CD4-positive, alpha-beta memory T cell (primary cell): ENCODE measurements at regions of chr2 and their contacts with region 1.

Region 1: DNA sequence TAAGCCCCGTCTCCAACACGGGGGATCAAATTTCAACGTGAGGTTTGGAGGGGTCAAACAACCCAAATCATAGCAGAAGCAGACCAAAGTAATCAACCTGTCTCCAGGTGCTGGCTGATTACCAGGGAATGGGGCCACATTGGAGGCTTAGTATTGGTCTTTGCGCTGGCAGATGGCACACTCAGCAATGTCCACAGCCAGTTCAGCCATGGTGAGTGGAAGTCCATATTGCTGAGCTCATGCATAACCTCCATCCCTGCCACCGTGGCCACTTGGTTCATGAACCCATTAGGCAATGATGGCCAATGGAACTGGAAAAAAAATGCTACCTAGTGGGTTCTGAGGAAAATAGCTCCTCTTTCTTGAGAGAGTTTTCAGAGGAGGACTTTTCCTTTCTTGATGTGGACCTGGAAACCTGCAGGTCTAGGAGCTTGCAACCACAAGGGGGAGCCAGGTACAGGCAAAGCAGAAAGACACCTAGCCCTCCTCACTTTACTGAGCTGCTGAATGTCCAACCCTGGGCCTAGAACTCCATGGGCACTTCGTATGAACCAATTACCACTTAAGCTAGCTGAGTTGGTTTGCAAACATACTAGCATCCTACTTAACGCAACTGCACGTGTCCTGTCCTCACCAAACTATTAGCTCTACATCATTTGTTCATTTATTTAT is 128.0 kb upstream of the GYPC start:
- DNase-seq: peak; percentile 57 to 68 (median 63)
- H3K4me3 ChIP-seq: no peak overlapping the region
- H3K4me3 Mint-ChIP-seq: no peak overlapping the region
- H3K27ac ChIP-seq: no peak overlapping the region
- H3K27ac Mint-ChIP-seq: no peak overlapping the region
- H3K4me1 ChIP-seq: no peaks in the 10 kb centered on the region
- H3K4me1 Mint-ChIP-seq: no peaks in the 10 kb centered on the region
- H3K27me3 ChIP-seq: no peaks in the 10 kb centered on the region
- H3K27me3 Mint-ChIP-seq: peaks cover 0 to 3% of the 10 kb centered on the region in 2 donors

Region 2: GRCh38 chr2:126463892-126464674 is 63.9 kb before region 1 on chr2:
- CTCF ChIA-PET with region 1: no interaction called
- POLR2A ChIA-PET with region 1: no interaction called
- intact Hi-C with region 1: no loop called
- DNase-seq: no peak
- H3K4me3 ChIP-seq: no peak overlapping the region
- H3K4me3 Mint-ChIP-seq: no peak overlapping the region
- H3K27ac ChIP-seq: no peak overlapping the region
- H3K27ac Mint-ChIP-seq: no peak overlapping the region
- H3K4me1 ChIP-seq: no peaks in the 10 kb centered on the region
- H3K4me1 Mint-ChIP-seq: peaks cover 0 to 8% (median 1%) of the 10 kb centered on the region in 4 donors
- H3K27me3 ChIP-seq: peaks cover 3% of the 10 kb centered on the region
- H3K27me3 Mint-ChIP-seq: peaks cover 1 to 4% of the 10 kb centered on the region in 2 donors

Region 3: GRCh38 chr2:126634273-126634861 is 106.4 kb after region 1 on chr2:
- CTCF ChIA-PET with region 1: interaction called, 15 read pairs
- POLR2A ChIA-PET with region 1: no interaction called
- intact Hi-C with region 1: no loop called
- DNase-seq: peak in 4 of 5 donors; percentile 9 to 19 (median 14)
- H3K4me3 ChIP-seq: no peak overlapping the region
- H3K4me3 Mint-ChIP-seq: no peak overlapping the region
- H3K27ac ChIP-seq: no peak overlapping the region
- H3K27ac Mint-ChIP-seq: no peak overlapping the region
- H3K4me1 ChIP-seq: no peaks in the 10 kb centered on the region
- H3K4me1 Mint-ChIP-seq: peaks cover 0 to 4% (median 3%) of the 10 kb centered on the region in 4 donors
- H3K27me3 ChIP-seq: peaks cover 3% of the 10 kb centered on the region
- H3K27me3 Mint-ChIP-seq: peaks cover 0 to 3% of the 10 kb centered on the region in 2 donors

Region 4: DNA sequence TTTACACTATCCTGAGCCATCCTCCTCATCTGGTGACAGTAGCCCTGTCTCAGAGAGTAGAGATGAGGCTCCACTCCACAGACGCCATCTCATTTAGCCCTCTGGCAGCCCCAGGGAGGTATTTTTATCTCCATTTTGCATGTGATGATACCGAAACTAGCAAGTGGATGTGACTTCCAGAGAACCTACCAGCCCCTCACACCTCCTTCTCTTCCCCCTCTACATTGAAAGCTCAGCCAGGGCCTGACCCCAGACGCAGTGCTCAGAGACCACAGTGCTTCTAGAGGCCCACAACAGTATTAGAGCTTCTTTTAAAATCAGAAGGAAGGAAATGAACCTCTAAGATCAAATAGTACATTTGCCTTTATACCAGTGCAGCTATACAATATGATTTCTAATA is 136.3 kb after region 1 on chr2:
- CTCF ChIA-PET with region 1: interaction called, 13 read pairs
- POLR2A ChIA-PET with region 1: interaction called, 3 read pairs
- intact Hi-C with region 1: no loop called
- DNase-seq: peak in 4 of 5 donors; percentile 15 to 37 (median 28)
- H3K4me3 ChIP-seq: peak overlapping the region in 1 of 2 donors; percentile 37
- H3K4me3 Mint-ChIP-seq: peak overlapping the region; percentile 73 to 87 (median 76)
- H3K27ac ChIP-seq: peak overlapping the region; percentile 23
- H3K27ac Mint-ChIP-seq: peak overlapping the region; percentile 94 to 98 (median 96)
- H3K4me1 ChIP-seq: peaks cover 80% of the 10 kb centered on the region
- H3K4me1 Mint-ChIP-seq: peaks cover 56 to 96% (median 86%) of the 10 kb centered on the region in 4 donors
- H3K27me3 ChIP-seq: no peaks in the 10 kb centered on the region
- H3K27me3 Mint-ChIP-seq: no peaks in the 10 kb centered on the region

Region 5: DNA sequence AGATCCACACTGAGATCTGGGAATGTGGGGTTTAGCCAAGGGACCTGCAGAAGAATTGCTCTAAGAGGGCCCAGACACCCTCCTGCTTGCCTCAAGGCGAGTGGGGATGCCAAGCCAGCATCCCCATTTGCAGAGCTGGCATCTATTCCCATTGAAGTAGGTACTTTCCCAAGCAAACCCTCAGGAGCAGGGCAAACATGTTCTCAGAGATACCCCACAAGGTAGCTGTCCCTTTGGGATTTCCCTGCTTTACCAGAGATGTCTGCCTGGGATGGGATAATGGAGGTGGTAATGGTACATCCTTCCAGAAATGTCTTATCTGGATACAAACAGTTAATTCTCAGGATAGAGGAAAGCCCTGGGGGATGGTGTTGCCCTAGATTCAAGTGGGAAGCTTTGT is 179.2 kb after region 1 on chr2:
- CTCF ChIA-PET with region 1: no interaction called
- POLR2A ChIA-PET with region 1: no interaction called
- intact Hi-C with region 1: no loop called
- DNase-seq: no peak
- H3K4me3 ChIP-seq: no peak overlapping the region
- H3K4me3 Mint-ChIP-seq: no peak overlapping the region
- H3K27ac ChIP-seq: no peak overlapping the region
- H3K27ac Mint-ChIP-seq: no peak overlapping the region
- H3K4me1 ChIP-seq: no peaks in the 10 kb centered on the region
- H3K4me1 Mint-ChIP-seq: peaks cover 0 to 3% (median 0%) of the 10 kb centered on the region in 4 donors
- H3K27me3 ChIP-seq: no peaks in the 10 kb centered on the region
- H3K27me3 Mint-ChIP-seq: peaks cover 0 to under 1% of the 10 kb centered on the region in 2 donors

Region 6: GRCh38 chr2:126761981-126762878 is 234.3 kb after region 1 on chr2:
- CTCF ChIA-PET with region 1: interaction called, 14 read pairs
- POLR2A ChIA-PET with region 1: interaction called, 5 read pairs
- intact Hi-C with region 1: loop called (anchors 5 kb)
- DNase-seq: peak; percentile 27 to 67 (median 59)
- H3K4me3 ChIP-seq: peak overlapping the region in 1 of 2 donors; percentile 11
- H3K4me3 Mint-ChIP-seq: peak overlapping the region; percentile 59 to 82 (median 72)
- H3K27ac ChIP-seq: peak overlapping the region; percentile 36
- H3K27ac Mint-ChIP-seq: peak overlapping the region; percentile 81 to 96 (median 90)
- H3K4me1 ChIP-seq: peaks cover 46% of the 10 kb centered on the region
- H3K4me1 Mint-ChIP-seq: peaks cover 34 to 75% (median 52%) of the 10 kb centered on the region in 4 donors
- H3K27me3 ChIP-seq: no peaks in the 10 kb centered on the region
- H3K27me3 Mint-ChIP-seq: no peaks in the 10 kb centered on the region

Region 7: DNA sequence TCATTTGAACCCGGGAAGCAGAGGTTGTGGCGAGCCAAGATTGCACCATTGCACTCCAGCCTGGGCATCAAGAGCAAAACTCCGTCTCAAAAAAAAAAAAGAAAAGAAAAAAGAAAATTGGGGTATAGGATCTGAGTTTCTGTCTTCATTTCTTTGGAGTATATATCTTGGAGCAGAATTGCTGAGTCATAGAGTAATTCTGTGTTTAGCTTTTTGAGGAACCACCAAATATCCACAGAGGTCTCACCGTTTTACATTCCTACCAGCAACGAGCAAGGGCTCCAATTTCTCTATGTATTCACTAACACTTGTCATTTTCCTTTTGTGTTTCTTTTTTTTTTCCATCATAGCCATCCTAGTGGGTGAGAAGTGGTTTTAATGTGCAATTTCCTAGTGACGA is 283.1 kb after region 1 on chr2:
- CTCF ChIA-PET with region 1: no interaction called
- POLR2A ChIA-PET with region 1: no interaction called
- intact Hi-C with region 1: no loop called
- DNase-seq: no peak
- H3K4me3 ChIP-seq: no peak overlapping the region
- H3K4me3 Mint-ChIP-seq: no peak overlapping the region
- H3K27ac ChIP-seq: no peak overlapping the region
- H3K27ac Mint-ChIP-seq: no peak overlapping the region
- H3K4me1 ChIP-seq: no peaks in the 10 kb centered on the region
- H3K4me1 Mint-ChIP-seq: no peaks in the 10 kb centered on the region
- H3K27me3 ChIP-seq: no peaks in the 10 kb centered on the region
- H3K27me3 Mint-ChIP-seq: peaks cover 6 to 7% of the 10 kb centered on the region in 2 donors

Region 8: GRCh38 chr2:126971481-126972278 is 443.7 kb after region 1 on chr2:
- CTCF ChIA-PET with region 1: interaction called, 21 read pairs
- POLR2A ChIA-PET with region 1: interaction called, 3 read pairs
- intact Hi-C with region 1: no loop called
- DNase-seq: peak; percentile 51 to 64 (median 59)
- H3K4me3 ChIP-seq: peak overlapping the region in 1 of 2 donors; percentile 41
- H3K4me3 Mint-ChIP-seq: peak overlapping the region; percentile 65 to 82 (median 80)
- H3K27ac ChIP-seq: no peak overlapping the region
- H3K27ac Mint-ChIP-seq: no peak overlapping the region
- H3K4me1 ChIP-seq: no peaks in the 10 kb centered on the region
- H3K4me1 Mint-ChIP-seq: peaks cover 0 to 8% (median 4%) of the 10 kb centered on the region in 4 donors
- H3K27me3 ChIP-seq: peaks cover 4% of the 10 kb centered on the region
- H3K27me3 Mint-ChIP-seq: peaks cover 32 to 46% of the 10 kb centered on the region in 2 donors